ENCODE measurements at regions of chr19 and their contacts with region 1.

Region 1: DNA sequence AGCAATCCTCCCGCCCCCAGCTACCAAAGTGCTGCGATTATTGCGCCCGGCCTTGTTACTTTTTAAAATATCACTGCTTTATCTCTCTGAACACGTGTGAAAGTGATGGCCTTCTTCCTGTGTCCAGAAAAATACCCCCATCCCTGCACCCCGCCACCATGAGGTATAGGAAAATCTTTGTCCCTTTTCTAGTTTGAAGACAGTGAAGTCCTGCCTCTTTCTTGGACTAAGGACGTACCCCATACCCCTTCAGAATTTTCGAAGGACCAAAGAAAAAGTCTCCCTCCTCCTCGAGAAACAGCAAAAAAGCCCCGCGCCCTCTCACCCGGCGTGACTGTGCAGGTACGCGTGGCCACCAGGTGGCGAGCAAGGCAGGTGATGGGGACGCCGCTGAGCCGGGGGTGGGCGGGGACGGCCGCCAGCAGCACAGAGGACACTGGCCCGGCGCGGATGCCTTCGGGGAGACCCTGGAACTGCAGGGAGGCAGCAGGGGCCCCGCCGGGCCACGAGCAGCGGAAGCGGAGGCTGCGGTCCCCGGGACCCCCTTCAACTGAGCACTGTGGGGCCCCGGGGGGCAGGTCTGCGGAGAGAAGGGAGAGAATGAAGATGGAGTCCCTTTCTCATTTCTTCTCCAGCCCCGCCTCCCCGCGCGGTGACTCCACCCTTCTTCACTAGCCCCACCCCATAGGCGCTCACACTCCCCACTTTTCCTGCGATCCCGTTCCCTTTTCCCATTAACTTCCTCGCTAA is 3.2 kb downstream of the VSIG10L start:
- DNase-seq: peak; percentile 73 to 92 (median 81)
- ATAC-seq: peak; percentile 84
- H3K4me3 ChIP-seq: peak overlapping the region; percentile 62
- H3K4me3 Mint-ChIP-seq: peak overlapping the region; percentile 80
- H3K27ac ChIP-seq: no peak overlapping the region
- H3K27ac Mint-ChIP-seq: peak overlapping the region; percentile 7
- H3K4me1 ChIP-seq: peaks cover 23% of the 10 kb centered on the region
- H3K4me1 Mint-ChIP-seq: peaks cover 23% of the 10 kb centered on the region
- H3K27me3 ChIP-seq: no peaks in the 10 kb centered on the region
- H3K27me3 Mint-ChIP-seq: no peaks in the 10 kb centered on the region
- CTCF ChIP-seq: peak; percentile 91

Region 2: GRCh38 chr19:51367565-51368365 is 29.0 kb after region 1 on chr19:
- CTCF ChIA-PET with region 1: no interaction called
- POLR2A ChIA-PET with region 1: interaction called, 4 read pairs
- intact Hi-C with region 1: loop called (anchors 1 kb)
- DNase-seq: peak; percentile 87 to 98 (median 94)
- ATAC-seq: peak; percentile 78
- H3K4me3 ChIP-seq: peak overlapping the region; percentile 90
- H3K4me3 Mint-ChIP-seq: peak overlapping the region; percentile 96
- H3K27ac ChIP-seq: peak overlapping the region; percentile 65 to 73
- H3K27ac Mint-ChIP-seq: peak overlapping the region; percentile 84
- H3K4me1 ChIP-seq: peaks cover 80% of the 10 kb centered on the region
- H3K4me1 Mint-ChIP-seq: peaks cover 74% of the 10 kb centered on the region
- H3K27me3 ChIP-seq: no peaks in the 10 kb centered on the region
- H3K27me3 Mint-ChIP-seq: no peaks in the 10 kb centered on the region
- CTCF ChIP-seq: no peak

Region 3: DNA sequence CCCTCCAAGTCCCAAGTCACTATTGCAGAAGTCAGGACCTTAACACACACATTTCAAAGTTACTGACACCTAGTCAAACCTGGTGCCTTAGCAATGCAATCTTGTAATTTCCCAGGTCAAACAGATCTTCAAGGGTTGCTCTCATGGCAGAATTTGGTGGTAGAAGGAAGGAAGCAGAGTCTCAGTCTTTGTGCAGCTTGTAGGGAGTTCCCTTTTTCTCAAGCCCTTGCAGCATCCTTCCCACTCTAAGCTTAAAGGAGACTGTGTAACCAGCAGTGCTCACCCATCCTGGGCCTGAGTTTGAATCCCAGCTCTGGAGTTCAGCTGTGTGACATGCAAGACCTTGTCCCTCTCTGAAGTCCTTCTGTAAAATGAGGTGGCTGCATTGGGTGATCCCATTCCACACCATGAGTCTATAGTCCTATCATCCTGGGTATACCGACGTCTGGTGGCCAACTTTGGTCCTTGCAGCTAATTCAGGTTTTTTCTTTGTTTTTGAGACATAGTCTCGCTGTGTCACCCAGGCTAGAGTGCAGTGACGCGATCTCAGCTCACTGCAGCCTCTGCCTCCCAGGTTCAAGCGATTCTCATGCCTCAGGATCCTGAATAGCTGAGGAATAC is 68.9 kb after region 1 on chr19:
- CTCF ChIA-PET with region 1: interaction called, 6 read pairs
- POLR2A ChIA-PET with region 1: no interaction called
- intact Hi-C with region 1: loop called in 1 of 2 experiments (anchors 1 kb)
- DNase-seq: peak in 5 of 14 experiments; percentile 11 to 65 (median 50)
- ATAC-seq: peak; percentile 37
- H3K4me3 ChIP-seq: no peak overlapping the region
- H3K4me3 Mint-ChIP-seq: no peak overlapping the region
- H3K27ac ChIP-seq: no peak overlapping the region
- H3K27ac Mint-ChIP-seq: no peak overlapping the region
- H3K4me1 ChIP-seq: no peaks in the 10 kb centered on the region
- H3K4me1 Mint-ChIP-seq: no peaks in the 10 kb centered on the region
- H3K27me3 ChIP-seq: no peaks in the 10 kb centered on the region
- H3K27me3 Mint-ChIP-seq: peaks cover 16% of the 10 kb centered on the region
- CTCF ChIP-seq: no peak

Region 4: GRCh38 chr19:51514866-51515481 is 176.2 kb after region 1 on chr19:
- CTCF ChIA-PET with region 1: no interaction called
- POLR2A ChIA-PET with region 1: no interaction called
- intact Hi-C with region 1: loop called (anchors 1 to 2 kb)
- DNase-seq: peak in 7 of 14 experiments; percentile 4 to 70 (median 17)
- ATAC-seq: no peak
- H3K4me3 ChIP-seq: no peak overlapping the region
- H3K4me3 Mint-ChIP-seq: no peak overlapping the region
- H3K27ac ChIP-seq: no peak overlapping the region
- H3K27ac Mint-ChIP-seq: no peak overlapping the region
- H3K4me1 ChIP-seq: no peaks in the 10 kb centered on the region
- H3K4me1 Mint-ChIP-seq: no peaks in the 10 kb centered on the region
- H3K27me3 ChIP-seq: peaks cover 0 to 7% of the 10 kb centered on the region in 2 experiments
- H3K27me3 Mint-ChIP-seq: peaks cover 65% of the 10 kb centered on the region
- CTCF ChIP-seq: peak; percentile 93

Region 5: DNA sequence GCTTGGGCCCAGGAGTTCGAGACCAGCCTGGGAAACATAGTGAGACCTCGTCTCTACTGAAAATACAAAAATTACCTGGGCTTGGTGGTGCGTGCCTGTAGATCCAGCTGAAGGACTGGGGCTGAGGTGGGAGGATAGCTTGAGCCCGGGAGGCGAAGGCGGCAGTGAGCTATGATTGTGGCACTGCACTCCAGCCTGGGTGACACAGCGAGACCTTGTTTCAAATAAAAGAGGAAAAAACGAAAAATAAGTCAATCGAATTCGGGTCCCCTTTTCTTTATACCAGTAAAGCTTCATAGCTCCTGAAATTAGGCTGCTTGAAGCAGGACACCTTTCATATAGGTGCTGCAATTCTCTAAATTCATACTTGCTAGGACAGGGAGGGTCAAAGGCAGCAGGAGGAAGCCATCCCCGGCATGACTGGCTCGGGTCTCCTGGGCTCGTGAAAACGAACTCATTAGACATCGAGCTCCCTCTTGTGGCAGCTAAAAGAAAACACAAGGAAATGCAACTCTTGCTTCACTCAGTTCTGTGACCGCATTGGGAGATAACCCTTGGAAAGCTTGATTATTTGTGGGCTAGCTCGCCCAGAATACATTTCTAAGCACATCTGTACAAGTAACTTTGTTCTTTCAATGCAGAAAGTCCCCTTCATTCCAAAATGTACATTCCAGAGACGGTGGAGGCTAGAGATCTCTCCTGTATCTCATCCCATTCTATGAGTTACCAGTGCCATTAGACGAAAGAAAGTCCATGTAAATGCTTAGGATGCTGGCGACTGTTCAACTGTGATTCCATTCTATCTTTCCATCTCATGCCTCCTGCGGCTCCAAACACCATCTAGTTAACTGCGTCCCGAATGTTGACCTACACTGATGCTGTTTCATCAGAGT is 439.1 kb after region 1 on chr19:
- CTCF ChIA-PET with region 1: no interaction called
- POLR2A ChIA-PET with region 1: no interaction called
- intact Hi-C with region 1: loop called in 1 of 2 experiments (anchors 2 kb)
- DNase-seq: peak; percentile 4 to 83 (median 18)
- ATAC-seq: peak; percentile 48
- H3K4me3 ChIP-seq: no peak overlapping the region
- H3K4me3 Mint-ChIP-seq: no peak overlapping the region
- H3K27ac ChIP-seq: no peak overlapping the region
- H3K27ac Mint-ChIP-seq: no peak overlapping the region
- H3K4me1 ChIP-seq: no peaks in the 10 kb centered on the region
- H3K4me1 Mint-ChIP-seq: no peaks in the 10 kb centered on the region
- H3K27me3 ChIP-seq: peaks cover 5 to 9% of the 10 kb centered on the region in 2 experiments
- H3K27me3 Mint-ChIP-seq: peaks cover 87% of the 10 kb centered on the region
- CTCF ChIP-seq: peak; percentile 66